Activated CD8-positive, alpha-beta T cell treated with anti-CD3 and anti-CD28 coated beads, Interleukin-2, amount 10 ng/mL, durations not matched to agents 7 days and 5 days (primary cell): ENCODE measurements at regions of chr9 and their contacts with region 1.

Region 1: GRCh38 chr9:121213136-121213806 is 11.6 kb upstream of the RAB14 start:
- DNase-seq: peak; percentile 77
- ATAC-seq: peak; percentile 70
- H3K4me3 Mint-ChIP-seq: no peak overlapping the region
- H3K27ac Mint-ChIP-seq: no peak overlapping the region
- H3K4me1 Mint-ChIP-seq: peaks cover 22% of the 10 kb centered on the region
- H3K27me3 Mint-ChIP-seq: no peaks in the 10 kb centered on the region

Region 2: GRCh38 chr9:121201738-121202533 is 11.3 kb before region 1 on chr9 and contains the start of gene RAB14:
- CTCF ChIA-PET with region 1: interaction called, 24 read pairs
- POLR2A ChIA-PET with region 1: interaction called, 8 read pairs
- DNase-seq: peak; percentile 100
- ATAC-seq: peak; percentile 89
- H3K4me3 Mint-ChIP-seq: peak within 1 kb of the TSS; percentile 96
- H3K27ac Mint-ChIP-seq: peak within 1 kb of the TSS; percentile 95
- H3K4me1 Mint-ChIP-seq: peaks cover 55% of the 10 kb centered on the region
- H3K27me3 Mint-ChIP-seq: no peaks in the 10 kb centered on the region
- total RNA-seq, gene RAB14: 56.7 to 68.2 TPM

Region 3: DNA sequence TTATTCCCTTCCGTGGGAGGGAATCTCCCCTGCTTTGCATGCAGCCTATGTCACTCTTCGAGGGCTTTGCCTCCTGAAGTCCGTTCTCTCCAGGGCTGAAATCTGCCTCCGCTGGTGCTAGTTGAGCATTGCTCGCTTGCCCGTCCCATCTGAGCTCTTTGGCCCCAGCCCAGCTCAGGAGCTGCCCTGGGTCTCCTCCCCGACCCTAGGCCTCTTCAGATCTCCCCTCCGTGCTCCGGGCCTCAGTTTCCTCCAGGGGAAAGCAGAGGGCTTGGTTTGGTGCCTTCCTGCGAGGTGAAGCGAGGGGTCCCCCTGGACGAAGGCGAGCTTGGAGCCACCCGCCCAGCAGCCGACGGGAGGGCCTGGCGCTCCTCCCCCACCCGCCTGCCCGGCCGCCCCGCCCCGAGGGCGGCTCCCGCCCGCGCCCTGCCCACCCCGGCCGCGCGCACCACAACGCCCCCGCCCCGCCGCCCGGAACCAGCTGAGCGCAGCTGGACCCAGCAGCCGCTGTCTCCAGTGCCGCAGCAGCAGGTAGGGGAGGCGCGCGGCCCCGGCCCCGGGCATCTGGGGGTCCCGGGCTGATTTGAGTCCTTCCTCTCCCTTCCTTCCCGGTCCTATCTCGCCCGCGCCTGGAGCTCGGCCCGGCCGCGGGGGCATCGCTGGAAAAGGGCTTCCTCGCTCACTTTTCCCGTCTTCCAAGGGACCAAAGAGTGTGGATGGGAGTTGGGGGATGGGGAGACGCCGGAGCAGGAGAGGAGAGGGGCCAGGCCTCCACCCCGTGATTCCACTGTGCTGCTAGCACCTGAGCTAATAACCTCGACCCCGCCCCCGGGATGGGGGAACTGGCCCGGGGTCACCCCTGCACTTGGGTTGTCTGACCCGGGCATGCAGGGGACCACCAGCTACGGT is 54.7 kb after region 1 on chr9 and contains the start of gene GSN:
- CTCF ChIA-PET with region 1: interaction called, 28 read pairs
- POLR2A ChIA-PET with region 1: no interaction called
- DNase-seq: peak; percentile 62
- ATAC-seq: peak; percentile 89
- H3K4me3 Mint-ChIP-seq: peak within 1 kb of the TSS; percentile 69
- H3K27ac Mint-ChIP-seq: no peak within 1 kb of the TSS
- H3K4me1 Mint-ChIP-seq: peaks cover 29% of the 10 kb centered on the region
- H3K27me3 Mint-ChIP-seq: peaks cover 16% of the 10 kb centered on the region
- total RNA-seq, gene GSN: 4.0 to 4.2 TPM

Region 4: GRCh38 chr9:121383715-121384114 is 170.4 kb after region 1 on chr9:
- CTCF ChIA-PET with region 1: interaction called, 13 read pairs
- POLR2A ChIA-PET with region 1: no interaction called
- DNase-seq: no peak
- ATAC-seq: no peak
- H3K4me3 Mint-ChIP-seq: no peak overlapping the region
- H3K27ac Mint-ChIP-seq: no peak overlapping the region
- H3K4me1 Mint-ChIP-seq: no peaks in the 10 kb centered on the region
- H3K27me3 Mint-ChIP-seq: peaks cover 19% of the 10 kb centered on the region